Caco-2 (cell line): ENCODE measurements at regions of chr4 and their contacts with region 1.

Region 1: GRCh38 chr4:155497306-155497705 is 120.5 kb upstream of the MAP9 start:
- DNase-seq: no peak
- H3K4me3 ChIP-seq: no peak overlapping the region
- H3K4me3 Mint-ChIP-seq: no peak overlapping the region
- H3K27ac Mint-ChIP-seq: no peak overlapping the region
- H3K4me1 ChIP-seq: no peaks in the 10 kb centered on the region
- H3K4me1 Mint-ChIP-seq: peaks cover 12% of the 10 kb centered on the region
- H3K27me3 ChIP-seq: no peaks in the 10 kb centered on the region
- H3K27me3 Mint-ChIP-seq: no peaks in the 10 kb centered on the region
- CTCF ChIP-seq: no peak

Region 2: DNA sequence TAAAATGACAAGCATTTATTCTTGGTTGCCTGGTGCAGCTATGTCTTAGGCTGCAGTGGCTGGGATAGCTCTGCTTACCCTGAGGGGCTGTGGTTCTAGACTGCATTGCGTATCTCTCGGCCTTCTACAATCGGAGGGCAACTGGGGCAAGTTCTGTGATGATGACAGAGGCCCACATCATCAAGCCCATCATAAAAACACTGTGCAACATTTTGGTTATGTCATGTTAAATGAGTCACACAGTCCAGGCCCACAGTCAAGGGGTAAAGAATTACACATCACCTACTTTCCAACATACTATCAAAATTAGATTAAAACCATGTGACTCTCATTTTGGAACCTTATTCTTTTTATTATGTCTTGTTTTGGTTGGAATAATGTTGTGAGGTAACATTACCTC is 49.1 kb after region 1 on chr4:
- CTCF ChIA-PET with region 1: no interaction called
- POLR2A ChIA-PET with region 1: no interaction called
- intact Hi-C with region 1: loop called (anchors 2 kb)
- DNase-seq: no peak
- H3K4me3 ChIP-seq: no peak overlapping the region
- H3K4me3 Mint-ChIP-seq: no peak overlapping the region
- H3K27ac Mint-ChIP-seq: no peak overlapping the region
- H3K4me1 ChIP-seq: no peaks in the 10 kb centered on the region
- H3K4me1 Mint-ChIP-seq: no peaks in the 10 kb centered on the region
- H3K27me3 ChIP-seq: no peaks in the 10 kb centered on the region
- H3K27me3 Mint-ChIP-seq: no peaks in the 10 kb centered on the region
- CTCF ChIP-seq: no peak